Vagina (tissue), 2 donors: ENCODE measurements at regions of chr6 and their contacts with region 1.

Region 1: DNA sequence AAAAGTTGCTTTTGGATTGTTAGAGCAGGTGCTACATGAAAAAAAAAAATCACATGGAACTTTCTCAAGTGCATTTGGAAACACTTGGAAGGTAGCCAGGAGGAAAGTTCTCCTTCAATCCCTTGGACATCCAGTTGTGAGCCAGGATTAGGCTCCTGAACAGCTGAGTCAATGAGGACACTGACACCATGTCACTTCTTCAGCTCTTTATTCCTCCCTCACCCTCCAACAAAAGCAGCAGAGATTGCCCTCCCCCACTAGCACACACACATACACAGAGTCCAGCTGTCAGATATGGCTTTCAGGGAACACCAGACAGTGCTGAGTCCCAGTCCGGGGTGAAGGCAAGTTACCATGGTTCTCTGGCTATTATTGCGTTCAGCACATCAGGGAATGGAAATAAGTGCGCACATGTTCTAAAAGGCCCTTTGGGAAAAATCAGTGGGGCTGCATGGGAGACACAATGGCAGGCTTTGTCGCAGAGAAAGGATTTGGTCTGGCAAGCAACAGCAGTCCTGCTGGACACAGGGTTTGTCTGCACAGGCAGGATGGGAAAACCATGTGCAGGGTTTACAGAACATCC is 124.7 kb upstream of the MARCKS start:
- DNase-seq: no peak
- H3K4me3 ChIP-seq: no peak overlapping the region
- H3K27ac ChIP-seq: no peak overlapping the region
- H3K4me1 ChIP-seq: peaks cover 11% of the 10 kb centered on the region
- H3K27me3 ChIP-seq: no peaks in the 10 kb centered on the region
- CTCF ChIP-seq: no peak
- POLR2A ChIP-seq: no peak

Region 2: DNA sequence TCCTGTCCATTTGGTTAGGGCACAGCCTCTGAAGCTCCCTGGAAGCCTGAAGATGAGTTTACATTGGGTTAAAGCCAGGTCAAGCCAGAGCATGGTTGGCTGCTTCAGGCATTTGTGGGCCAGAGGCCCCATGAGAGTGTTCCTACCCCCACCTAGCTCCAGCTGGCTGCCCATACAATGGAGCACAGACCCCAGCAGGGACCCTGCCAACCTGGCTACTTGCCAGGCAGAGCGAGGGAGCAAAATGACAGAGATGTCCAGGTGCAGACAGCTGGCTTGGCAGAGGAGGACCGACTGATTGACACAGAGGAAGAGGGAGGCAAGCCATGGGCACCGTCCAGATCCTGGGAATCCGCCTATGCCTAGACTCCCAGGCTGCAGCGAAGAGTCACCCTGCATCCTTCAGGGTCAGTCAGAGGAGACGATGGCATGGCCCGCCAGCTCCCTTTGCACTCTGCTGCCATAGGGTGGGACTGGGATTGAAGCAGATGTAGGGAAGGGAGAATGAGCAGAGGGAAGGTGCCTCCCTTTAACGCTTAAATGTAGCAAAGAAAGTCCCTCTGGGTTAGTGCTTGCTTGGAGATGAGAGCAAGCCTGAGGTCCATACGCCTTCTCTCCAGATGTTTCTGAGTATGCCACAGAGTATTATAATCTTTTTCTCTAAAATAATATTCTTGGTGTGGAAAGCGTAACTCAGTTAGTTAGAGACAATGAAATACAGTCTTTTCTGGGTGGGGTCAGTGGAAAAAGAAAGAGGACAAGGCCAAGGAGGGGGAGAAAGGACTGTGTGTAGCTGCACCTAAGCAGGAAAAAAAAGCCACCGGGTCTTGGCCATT is 1781.6 kb before region 1 on chr6:
- intact Hi-C with region 1: loop called (anchors 5 kb)
- DNase-seq: no peak
- H3K4me3 ChIP-seq: no peak overlapping the region
- H3K27ac ChIP-seq: no peak overlapping the region
- H3K4me1 ChIP-seq: no peaks in the 10 kb centered on the region
- H3K27me3 ChIP-seq: no peaks in the 10 kb centered on the region
- CTCF ChIP-seq: no peak
- POLR2A ChIP-seq: no peak

Region 3: DNA sequence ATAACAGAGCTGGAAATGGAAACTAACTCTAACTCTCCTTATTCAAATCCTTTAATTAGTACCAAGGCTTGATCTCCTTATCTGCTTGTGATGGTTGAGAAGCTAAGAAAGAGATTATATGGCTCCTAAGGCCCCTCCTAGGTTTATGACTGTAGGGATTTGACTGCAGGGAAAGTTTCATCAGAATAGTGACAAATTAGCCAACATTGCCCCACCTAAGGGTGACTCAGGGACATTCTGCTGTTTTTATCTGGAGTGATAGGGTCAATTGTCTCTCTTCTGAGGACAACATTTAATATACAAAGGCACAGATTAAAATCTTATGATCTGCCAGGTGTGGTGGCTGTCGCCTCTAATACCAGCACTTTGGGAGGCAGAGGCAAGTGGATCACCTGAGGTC is 13.4 kb before region 1 on chr6:
- intact Hi-C with region 1: loop called (anchors 1 kb)
- DNase-seq: no peak
- H3K4me3 ChIP-seq: no peak overlapping the region
- H3K27ac ChIP-seq: no peak overlapping the region
- H3K4me1 ChIP-seq: no peaks in the 10 kb centered on the region
- H3K27me3 ChIP-seq: no peaks in the 10 kb centered on the region
- CTCF ChIP-seq: no peak
- POLR2A ChIP-seq: no peak